Endothelial cell of umbilical vein (primary cell): ENCODE measurements at regions of chr11 and their contacts with region 1.

Region 1: DNA sequence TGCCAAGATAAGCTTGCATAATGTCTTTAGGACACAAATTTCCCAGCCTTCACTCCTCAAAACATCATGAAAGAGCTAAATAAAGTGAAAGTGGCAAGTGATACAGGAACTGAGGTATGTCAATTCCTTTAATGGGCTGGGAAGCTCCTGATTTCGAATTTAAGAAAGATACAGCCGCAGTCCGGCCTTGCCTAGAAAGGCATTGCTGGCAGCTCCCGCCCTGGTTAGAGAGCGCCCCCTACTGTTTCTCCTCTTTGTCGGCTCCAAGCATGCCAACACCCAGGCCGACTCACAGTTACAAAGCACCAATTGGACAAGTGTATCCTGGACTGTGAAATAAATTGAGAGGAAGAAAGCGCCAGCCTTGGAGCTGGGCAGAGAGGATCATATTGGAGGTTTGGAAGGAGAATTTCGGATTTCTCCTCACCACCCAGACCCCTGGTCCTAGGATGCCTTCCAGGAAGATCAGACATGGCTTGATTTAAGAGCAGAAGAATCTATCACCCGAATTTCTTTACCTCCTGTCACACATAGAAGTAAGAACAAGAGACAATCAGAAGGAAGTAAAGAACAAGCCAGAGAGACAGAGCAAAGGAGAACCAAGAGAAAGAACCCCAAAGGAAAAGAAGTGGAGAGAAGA is 84.0 kb downstream of the FAM76B start:
- DNase-seq: peak; percentile 87
- H3K4me3 ChIP-seq: no peak overlapping the region
- H3K27ac ChIP-seq: no peak overlapping the region
- H3K4me1 ChIP-seq: no peaks in the 10 kb centered on the region
- H3K27me3 ChIP-seq: peaks cover 13 to 17% of the 10 kb centered on the region in 2 experiments
- CTCF ChIP-seq: peak; percentile 83 to 93
- POLR2A ChIP-seq: no peak

Region 2: DNA sequence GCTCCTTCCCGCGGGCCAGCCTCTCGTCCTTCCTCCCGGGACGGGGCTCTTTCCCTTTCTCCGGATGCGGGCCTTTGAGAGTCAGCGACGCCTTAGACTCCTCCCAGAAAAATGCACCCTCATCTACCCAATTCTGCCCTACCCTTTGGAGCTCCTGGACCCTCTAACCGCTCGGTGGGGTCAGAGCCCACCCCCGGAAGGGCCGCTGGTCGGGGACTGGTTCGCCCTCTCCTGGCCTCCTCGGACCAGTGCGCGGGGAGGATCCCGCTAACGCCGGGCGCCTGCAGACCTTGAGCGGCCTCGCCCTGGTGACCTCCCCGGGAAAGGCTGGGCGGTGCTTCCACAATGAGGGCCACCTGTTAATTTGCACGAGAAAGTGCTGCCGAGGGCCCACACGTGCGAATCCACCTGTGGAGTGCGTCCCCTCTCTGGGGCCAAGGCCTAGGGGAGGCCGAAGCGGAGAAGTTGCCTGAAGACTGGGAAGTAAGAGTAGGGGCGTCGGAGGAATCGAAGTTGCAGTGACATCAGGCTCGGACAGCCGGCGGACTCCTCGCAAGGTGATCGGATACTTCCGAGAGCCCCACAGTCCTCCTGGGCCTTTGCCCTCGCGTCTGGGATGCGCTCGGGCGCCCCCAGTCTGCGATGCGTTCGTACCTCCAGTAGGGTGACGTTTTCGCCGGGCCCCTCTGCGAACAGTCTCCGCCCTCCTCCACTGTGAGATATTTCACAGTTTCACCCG is 554.5 kb before region 1 on chr11:
- CTCF ChIA-PET with region 1: interaction called, 176 read pairs
- POLR2A ChIA-PET with region 1: no interaction called
- dilution Hi-C with region 1: no loop called
- intact Hi-C with region 1: loop called (anchors 1 kb)
- DNase-seq: peak; percentile 92
- H3K4me3 ChIP-seq: peak overlapping the region; percentile 9 to 39 (median 34)
- H3K27ac ChIP-seq: peak overlapping the region; percentile 62
- H3K4me1 ChIP-seq: peaks cover 36% of the 10 kb centered on the region
- H3K27me3 ChIP-seq: no peaks in the 10 kb centered on the region
- CTCF ChIP-seq: peak; percentile 73 to 84
- POLR2A ChIP-seq: no peak

Region 3: GRCh38 chr11:95364324-95365295 is 341.0 kb before region 1 on chr11:
- CTCF ChIA-PET with region 1: no interaction called
- POLR2A ChIA-PET with region 1: no interaction called
- dilution Hi-C with region 1: no loop called
- intact Hi-C with region 1: loop called (anchors 10 kb)
- DNase-seq: no peak
- H3K4me3 ChIP-seq: no peak overlapping the region
- H3K27ac ChIP-seq: no peak overlapping the region
- H3K4me1 ChIP-seq: no peaks in the 10 kb centered on the region
- H3K27me3 ChIP-seq: no peaks in the 10 kb centered on the region
- CTCF ChIP-seq: no peak
- POLR2A ChIP-seq: no peak

Region 4: DNA sequence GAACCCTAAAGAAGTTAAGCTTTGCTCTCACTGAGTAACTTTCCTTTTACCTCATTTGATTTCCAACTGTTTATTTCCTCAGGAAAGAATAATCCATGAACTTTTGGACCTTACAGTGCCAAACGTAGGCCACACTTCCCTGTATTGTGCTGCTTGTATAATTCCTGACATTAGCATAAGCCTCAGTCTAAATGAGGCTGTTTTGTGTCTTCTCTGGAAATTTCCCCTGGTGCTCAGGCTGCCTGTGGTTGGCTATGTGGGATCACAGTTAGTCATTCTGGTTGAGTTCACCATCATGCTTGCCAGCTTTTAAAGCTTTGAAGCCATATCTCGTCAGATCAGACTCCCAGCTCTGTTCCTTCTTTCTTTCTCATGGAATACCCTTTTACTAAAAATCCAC is 23.1 kb before region 1 on chr11:
- CTCF ChIA-PET with region 1: interaction called, 10 read pairs
- POLR2A ChIA-PET with region 1: no interaction called
- dilution Hi-C with region 1: no loop called
- intact Hi-C with region 1: no loop called
- DNase-seq: peak; percentile 92
- H3K4me3 ChIP-seq: no peak overlapping the region
- H3K27ac ChIP-seq: no peak overlapping the region
- H3K4me1 ChIP-seq: no peaks in the 10 kb centered on the region
- H3K27me3 ChIP-seq: no peaks in the 10 kb centered on the region
- CTCF ChIP-seq: no peak
- POLR2A ChIP-seq: no peak

Region 5: DNA sequence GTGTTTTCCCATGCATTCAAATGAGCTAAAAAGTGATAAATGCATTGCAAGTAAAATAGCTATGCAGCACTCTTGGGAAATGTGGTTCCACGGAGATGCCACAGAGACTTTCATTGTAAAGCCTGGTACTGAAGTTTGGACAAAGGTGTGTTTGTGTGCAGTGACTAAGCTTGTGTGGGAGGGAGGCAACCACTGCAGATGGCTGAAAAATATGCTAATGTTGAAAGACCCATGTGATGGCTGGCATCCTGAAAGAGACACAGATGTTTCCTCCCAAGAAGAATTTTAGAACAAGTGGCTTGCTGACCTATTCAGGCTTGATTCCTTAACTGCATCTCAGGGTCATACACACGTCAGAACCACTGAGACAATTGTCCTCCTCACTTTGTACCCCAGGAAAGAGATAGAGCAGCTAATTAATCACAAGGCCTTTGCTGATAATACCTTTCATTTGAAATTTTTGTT is 10.2 kb after region 1 on chr11:
- CTCF ChIA-PET with region 1: interaction called, 13 read pairs
- POLR2A ChIA-PET with region 1: no interaction called
- dilution Hi-C with region 1: no loop called
- intact Hi-C with region 1: no loop called
- DNase-seq: peak; percentile 90
- H3K4me3 ChIP-seq: no peak overlapping the region
- H3K27ac ChIP-seq: peak overlapping the region; percentile 12
- H3K4me1 ChIP-seq: no peaks in the 10 kb centered on the region
- H3K27me3 ChIP-seq: peaks cover 7 to 18% of the 10 kb centered on the region in 2 experiments
- CTCF ChIP-seq: no peak
- POLR2A ChIP-seq: no peak

Region 6: DNA sequence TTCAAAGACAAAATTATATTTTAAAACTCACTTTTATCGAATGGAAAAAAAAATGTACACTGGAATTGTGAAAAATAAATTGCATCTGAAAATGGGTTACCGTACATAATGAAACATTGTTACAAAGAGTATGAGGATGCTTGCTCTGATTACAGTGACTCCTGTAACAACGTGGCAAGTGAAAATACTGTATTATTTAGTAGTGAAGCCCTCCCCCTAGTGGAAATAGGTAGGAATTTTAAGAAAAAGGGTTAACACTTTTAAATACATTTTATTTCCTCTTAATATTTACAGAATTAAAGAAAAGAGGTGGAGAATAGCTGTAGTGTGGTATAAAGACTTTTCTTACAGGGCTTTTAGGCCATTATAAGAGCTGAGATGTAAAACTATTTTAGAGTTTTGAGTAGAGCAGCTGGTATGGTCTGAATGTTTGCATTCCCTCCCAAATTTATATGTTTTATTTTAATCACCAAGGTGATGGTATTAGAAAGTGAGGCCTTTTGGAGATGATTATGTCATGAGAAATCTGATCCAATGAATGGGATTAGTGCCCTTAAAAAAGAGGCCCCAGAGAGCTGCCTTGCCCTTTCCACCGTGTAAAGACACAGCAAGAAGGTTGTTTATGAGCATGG is 58.8 kb after region 1 on chr11:
- CTCF ChIA-PET with region 1: interaction called, 5 read pairs
- POLR2A ChIA-PET with region 1: no interaction called
- dilution Hi-C with region 1: no loop called
- intact Hi-C with region 1: loop called (anchors 5 kb)
- DNase-seq: peak; percentile 70
- H3K4me3 ChIP-seq: no peak overlapping the region
- H3K27ac ChIP-seq: no peak overlapping the region
- H3K4me1 ChIP-seq: no peaks in the 10 kb centered on the region
- H3K27me3 ChIP-seq: peaks cover 5 to 6% of the 10 kb centered on the region in 2 experiments
- CTCF ChIP-seq: peak; percentile 33 to 37
- POLR2A ChIP-seq: no peak